IMR-90 (cell line): ENCODE measurements at regions of chr14 and their contacts with region 1.

Region 1: DNA sequence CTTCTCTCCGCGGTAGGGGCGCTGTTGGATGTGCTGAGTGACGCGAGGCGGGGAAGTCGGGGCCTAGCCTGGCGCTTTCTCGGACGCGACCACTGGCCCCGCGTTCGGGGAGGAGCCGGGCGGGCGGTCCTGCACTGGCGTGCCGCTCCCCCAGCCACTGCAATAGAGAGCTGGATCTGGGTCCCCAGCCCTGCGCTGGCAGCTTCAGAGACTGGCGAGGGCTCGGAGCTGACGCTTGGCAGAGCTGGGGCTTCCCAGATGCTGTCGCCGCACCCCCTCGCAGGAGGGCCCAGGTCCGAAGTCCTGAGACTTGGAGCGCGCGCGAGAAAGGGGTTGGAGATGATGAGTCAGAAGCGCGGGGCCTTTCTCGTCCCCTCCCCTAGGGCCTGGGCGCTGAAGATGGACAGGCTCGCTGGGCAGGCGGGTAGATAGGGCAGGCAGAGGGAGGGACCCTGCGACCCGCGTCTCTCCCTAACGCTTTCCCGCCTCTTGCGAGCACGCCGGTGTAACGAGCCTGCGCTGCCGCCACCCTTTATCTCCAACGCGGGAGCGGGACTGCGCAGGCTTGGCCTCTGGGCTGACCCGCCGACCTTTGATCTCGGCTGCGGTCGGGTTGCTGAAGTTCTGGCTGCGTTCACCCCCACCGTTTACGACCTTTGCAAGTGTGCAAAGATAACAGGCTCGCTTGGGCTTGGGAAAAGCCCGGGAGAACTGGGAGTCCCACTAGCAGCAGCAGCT is 3.0 kb downstream of the TMEM253 start:
- DNase-seq: peak; percentile 94
- ATAC-seq: peak; percentile 92
- H3K4me3 ChIP-seq: peak overlapping the region; percentile 60
- H3K27ac ChIP-seq: peak overlapping the region; percentile 94
- H3K4me1 ChIP-seq: peaks cover 6% of the 10 kb centered on the region
- H3K27me3 ChIP-seq: no peaks in the 10 kb centered on the region
- CTCF ChIP-seq: peak; percentile 94
- POLR2A ChIP-seq: peak; percentile 64; the same call in 1 of the 2 replicates
- RAD21 ChIP-seq: no peak

Region 2: GRCh38 chr14:20682435-20683124 is 421.3 kb before region 1 on chr14:
- CTCF ChIA-PET with region 1: no interaction called
- POLR2A ChIA-PET with region 1: no interaction called
- dilution Hi-C with region 1: no loop called
- in situ Hi-C with region 1: no loop called
- intact Hi-C with region 1: loop called (anchors 5 kb)
- DNase-seq: peak; percentile 92
- ATAC-seq: peak; percentile 67
- H3K4me3 ChIP-seq: peak overlapping the region; percentile 65
- H3K27ac ChIP-seq: peak overlapping the region; percentile 90
- H3K4me1 ChIP-seq: no peaks in the 10 kb centered on the region
- H3K27me3 ChIP-seq: no peaks in the 10 kb centered on the region
- CTCF ChIP-seq: no peak
- POLR2A ChIP-seq: peak; percentile 92
- RAD21 ChIP-seq: no peak

Region 3: DNA sequence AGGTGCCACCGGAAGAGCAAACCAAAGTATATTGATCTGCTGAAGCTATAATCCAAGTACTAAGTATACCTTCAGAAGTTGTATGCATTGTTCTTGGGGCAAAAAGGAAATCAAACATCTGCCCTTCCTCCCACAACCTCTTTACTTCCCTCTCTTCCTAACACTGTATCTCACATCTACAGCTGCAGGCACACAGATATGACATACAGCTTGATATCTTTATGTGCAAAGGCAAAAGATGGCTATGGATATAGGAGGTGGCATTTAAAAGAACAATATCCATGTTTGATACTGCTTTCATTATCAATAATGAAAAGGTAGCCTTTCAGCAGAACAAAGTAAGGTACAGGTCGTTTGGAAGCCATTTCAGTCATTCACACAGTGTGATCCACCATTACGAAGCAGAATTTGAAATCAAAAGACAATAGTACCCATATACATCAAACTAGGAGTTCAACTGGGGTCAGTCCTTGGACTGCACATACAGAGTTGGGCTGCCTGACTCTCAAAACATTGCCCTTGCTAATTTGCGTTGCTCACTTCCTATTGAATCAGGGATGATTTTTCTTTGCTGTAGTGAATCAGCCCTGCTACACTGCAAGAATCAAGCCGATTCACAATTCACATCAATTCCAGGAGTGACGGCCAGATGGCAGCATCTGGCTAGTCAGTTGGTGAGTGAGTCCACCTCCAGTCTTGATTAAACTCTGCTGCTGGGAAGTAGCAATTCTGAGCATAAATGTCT is 406.4 kb before region 1 on chr14:
- CTCF ChIA-PET with region 1: no interaction called
- POLR2A ChIA-PET with region 1: no interaction called
- dilution Hi-C with region 1: no loop called
- in situ Hi-C with region 1: no loop called
- intact Hi-C with region 1: loop called (anchors 5 kb)
- DNase-seq: peak; percentile 75
- ATAC-seq: peak; percentile 91
- H3K4me3 ChIP-seq: no peak overlapping the region
- H3K27ac ChIP-seq: no peak overlapping the region
- H3K4me1 ChIP-seq: no peaks in the 10 kb centered on the region
- H3K27me3 ChIP-seq: no peaks in the 10 kb centered on the region
- CTCF ChIP-seq: peak; percentile 74
- POLR2A ChIP-seq: no peak
- RAD21 ChIP-seq: peak; percentile 74

Region 4: DNA sequence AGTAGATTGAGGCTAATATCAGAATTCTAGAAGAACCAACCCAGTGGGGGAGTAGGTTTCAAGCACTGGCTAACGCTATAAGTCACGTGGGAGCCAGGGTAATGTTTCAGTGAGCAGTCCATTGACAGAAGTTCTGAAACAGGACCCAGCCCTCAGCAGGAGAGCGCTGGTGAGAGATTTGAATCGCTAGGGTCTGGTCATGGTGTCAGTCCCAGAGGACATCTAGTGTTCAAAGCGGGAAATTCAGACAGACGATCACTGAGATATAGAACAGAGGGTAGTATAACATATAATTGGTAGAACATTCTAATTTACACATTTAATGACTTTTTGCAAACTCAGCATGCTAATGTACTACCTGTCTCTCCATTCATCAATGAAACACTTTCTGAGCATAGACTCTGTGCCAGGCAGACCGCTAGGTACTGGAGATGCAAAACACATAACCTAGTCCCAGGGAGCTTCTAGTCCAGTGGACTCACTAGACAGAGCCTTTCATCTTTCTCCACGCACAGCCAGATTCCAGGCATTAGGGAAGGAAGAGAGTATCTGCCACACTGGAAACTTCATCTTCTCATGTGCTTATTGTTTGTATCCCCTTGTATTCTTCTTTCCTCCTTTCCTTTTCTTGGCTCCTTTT is 248.1 kb before region 1 on chr14:
- CTCF ChIA-PET with region 1: no interaction called
- POLR2A ChIA-PET with region 1: no interaction called
- dilution Hi-C with region 1: no loop called
- in situ Hi-C with region 1: no loop called
- intact Hi-C with region 1: loop called (anchors 5 kb)
- DNase-seq: peak; percentile 59
- ATAC-seq: peak; percentile 89
- H3K4me3 ChIP-seq: no peak overlapping the region
- H3K27ac ChIP-seq: no peak overlapping the region
- H3K4me1 ChIP-seq: no peaks in the 10 kb centered on the region
- H3K27me3 ChIP-seq: peaks cover 2% of the 10 kb centered on the region; the same call in 1 of the 2 replicates
- CTCF ChIP-seq: peak; percentile 61
- POLR2A ChIP-seq: no peak
- RAD21 ChIP-seq: peak; percentile 63

Region 5: DNA sequence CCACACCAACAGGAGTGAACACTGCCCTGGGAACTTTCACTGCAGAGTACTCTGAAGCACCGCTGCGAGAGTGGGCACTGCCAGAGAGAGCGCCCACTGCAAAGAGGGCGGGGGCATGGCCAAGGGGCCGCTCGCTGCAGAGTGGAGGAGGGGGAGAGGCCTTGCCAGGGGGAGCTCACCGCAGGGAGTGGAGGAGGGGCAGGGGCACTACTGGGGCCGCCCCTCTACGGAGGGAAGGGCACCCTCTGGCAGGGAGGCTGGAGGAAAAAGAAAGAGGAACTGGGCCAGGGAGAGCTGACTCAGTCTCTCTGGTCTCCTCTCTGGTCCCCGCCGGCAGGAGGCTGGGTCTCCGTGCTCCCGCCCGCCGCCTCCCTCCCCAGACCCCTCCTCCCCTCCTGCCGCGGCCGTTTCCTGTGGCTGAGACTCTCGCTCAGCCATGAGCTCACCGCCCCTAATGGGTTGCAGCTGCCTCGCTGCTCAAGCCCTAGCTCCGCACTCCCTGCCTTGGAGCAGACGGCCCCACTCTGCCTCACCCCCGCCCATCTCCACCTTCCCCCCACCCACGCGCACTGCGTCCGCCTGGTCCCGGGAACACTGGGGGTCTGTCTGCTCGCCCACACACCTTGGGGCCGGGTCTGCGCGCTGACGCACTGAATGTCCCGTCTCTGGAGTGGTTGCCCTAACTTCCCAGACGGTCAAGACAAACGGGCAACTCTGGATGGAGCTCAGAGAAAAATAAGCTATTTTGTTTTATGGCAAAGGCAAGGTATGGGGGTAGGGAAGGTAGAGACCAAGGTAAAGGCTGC is 32.5 kb before region 1 on chr14:
- CTCF ChIA-PET with region 1: interaction called, 23 read pairs
- POLR2A ChIA-PET with region 1: interaction called, 8 read pairs
- dilution Hi-C with region 1: no loop called
- in situ Hi-C with region 1: no loop called
- intact Hi-C with region 1: loop called (anchors 1 kb)
- DNase-seq: peak; percentile 95
- ATAC-seq: peak; percentile 73
- H3K4me3 ChIP-seq: peak overlapping the region; percentile 68
- H3K27ac ChIP-seq: peak overlapping the region; percentile 96
- H3K4me1 ChIP-seq: peaks cover 22% of the 10 kb centered on the region
- H3K27me3 ChIP-seq: no peaks in the 10 kb centered on the region
- CTCF ChIP-seq: no peak
- POLR2A ChIP-seq: peak; percentile 69; the same call in 1 of the 2 replicates
- RAD21 ChIP-seq: no peak

Region 6: DNA sequence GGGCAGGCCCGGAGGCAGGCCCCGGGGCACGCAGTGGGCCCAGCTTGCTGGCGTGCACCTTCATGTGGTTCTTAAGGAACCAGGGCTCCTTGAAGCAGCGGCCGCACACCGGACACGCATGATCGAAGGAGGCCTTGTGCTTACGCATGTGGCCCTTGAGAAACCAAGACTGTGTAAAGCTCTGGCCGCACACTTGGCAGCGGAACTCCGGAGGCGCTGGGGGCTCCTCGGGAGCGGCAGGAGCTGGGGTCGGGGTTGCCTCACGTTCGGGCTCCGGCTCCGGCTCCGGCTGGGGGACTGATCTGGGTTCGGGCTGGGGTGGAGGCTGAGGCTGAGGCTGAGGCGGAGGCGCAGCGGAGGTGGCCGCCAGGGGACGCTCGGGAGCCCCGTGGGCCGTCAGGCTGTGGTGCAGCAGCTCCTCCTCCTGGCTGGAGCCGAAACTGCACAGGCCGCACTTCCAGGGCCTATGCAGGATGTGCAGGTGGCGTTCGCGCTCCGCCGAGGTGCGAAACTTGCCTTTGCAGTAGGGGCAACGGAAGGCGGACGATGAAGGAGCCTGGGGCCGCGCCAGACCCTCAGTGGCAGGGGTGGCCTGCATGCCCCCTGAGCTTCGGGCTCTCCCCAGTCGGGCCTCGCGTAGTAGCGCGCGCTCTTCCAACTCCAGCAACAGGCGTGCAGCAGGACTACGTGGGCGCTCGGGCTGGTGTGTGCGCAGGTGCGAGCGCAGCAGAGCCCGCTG is 11.4 kb before region 1 on chr14:
- CTCF ChIA-PET with region 1: interaction called, 22 read pairs
- POLR2A ChIA-PET with region 1: no interaction called
- dilution Hi-C with region 1: no loop called
- in situ Hi-C with region 1: no loop called
- intact Hi-C with region 1: loop called (anchors 1 kb)
- DNase-seq: peak; percentile 67
- ATAC-seq: peak; percentile 85
- H3K4me3 ChIP-seq: no peak overlapping the region
- H3K27ac ChIP-seq: no peak overlapping the region
- H3K4me1 ChIP-seq: peaks cover 5% of the 10 kb centered on the region
- H3K27me3 ChIP-seq: no peaks in the 10 kb centered on the region
- CTCF ChIP-seq: peak; percentile 100; the same call in 1 of the 2 replicates
- POLR2A ChIP-seq: peak; percentile 65; the same call in 1 of the 2 replicates
- RAD21 ChIP-seq: peak; percentile 100